ENCODE measurements at regions of chr12 and their contacts with region 1.

Region 1: DNA sequence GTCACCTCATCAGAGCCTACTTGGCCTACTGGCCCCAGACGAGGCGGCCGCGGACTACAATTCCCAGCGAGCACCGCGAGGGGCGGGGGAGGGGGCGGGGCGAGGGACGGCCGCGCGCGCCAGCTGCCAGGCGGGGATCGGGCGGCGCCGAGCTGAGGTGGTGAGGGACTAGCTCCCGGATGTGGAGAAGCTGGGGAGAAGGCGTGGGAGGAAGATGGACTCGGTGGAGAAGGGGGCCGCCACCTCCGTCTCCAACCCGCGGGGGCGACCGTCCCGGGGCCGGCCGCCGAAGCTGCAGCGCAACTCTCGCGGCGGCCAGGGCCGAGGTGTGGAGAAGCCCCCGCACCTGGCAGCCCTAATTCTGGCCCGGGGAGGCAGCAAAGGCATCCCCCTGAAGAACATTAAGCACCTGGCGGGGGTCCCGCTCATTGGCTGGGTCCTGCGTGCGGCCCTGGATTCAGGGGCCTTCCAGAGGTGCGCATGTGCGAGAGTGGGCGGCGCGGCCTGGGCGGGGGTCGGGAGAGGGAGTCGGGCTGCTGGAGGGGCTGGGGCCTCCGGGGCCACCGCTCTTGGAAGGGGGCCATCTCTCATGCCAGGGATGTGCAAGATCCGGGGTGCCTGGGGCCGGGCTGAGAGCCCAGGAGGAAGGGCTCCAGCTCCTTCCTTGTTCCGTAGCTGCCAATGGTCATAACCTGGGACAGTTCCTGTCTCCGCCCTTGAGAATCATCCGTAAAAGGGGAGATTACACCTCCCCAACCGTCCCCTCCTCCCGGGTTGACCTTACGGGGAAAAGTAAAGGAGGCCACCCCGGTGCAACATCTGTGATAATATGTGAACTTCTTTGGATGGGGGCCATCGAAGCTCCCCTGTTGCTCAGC is at the start of gene CMAS:
- DNase-seq: peak; percentile 87
- H3K4me3 Mint-ChIP-seq: peak within 1 kb of the TSS; percentile 96
- H3K27ac Mint-ChIP-seq: peak within 1 kb of the TSS; percentile 89
- H3K4me1 Mint-ChIP-seq: peaks cover 51% of the 10 kb centered on the region
- H3K27me3 Mint-ChIP-seq: no peaks in the 10 kb centered on the region
- total RNA-seq, gene CMAS: 51.1 to 51.2 TPM

Region 2: DNA sequence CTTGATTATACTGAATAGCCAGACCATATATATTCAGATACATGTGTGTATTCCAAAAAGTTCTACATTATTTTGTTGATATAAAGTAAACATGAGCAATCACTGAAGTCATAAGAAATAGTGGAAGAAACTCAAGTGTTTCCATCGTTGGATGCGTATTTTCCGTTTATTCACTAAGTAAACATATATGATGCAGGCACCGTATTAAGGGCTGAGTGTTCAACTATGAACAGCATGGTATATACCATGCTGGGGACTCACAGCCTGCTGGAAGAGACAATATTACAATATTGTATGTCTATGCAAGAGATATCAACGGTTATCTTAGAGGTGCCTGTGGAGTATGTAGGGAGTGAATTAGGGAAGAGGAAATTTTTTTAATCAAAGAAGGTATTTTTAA is 607.7 kb before region 1 on chr12:
- CTCF ChIA-PET with region 1: no interaction called
- POLR2A ChIA-PET with region 1: no interaction called
- intact Hi-C with region 1: loop called (anchors 5 kb)
- DNase-seq: no peak
- H3K4me3 Mint-ChIP-seq: peak overlapping the region; percentile 93
- H3K27ac Mint-ChIP-seq: peak overlapping the region; percentile 96
- H3K4me1 Mint-ChIP-seq: peaks cover 39% of the 10 kb centered on the region
- H3K27me3 Mint-ChIP-seq: no peaks in the 10 kb centered on the region

Region 3: DNA sequence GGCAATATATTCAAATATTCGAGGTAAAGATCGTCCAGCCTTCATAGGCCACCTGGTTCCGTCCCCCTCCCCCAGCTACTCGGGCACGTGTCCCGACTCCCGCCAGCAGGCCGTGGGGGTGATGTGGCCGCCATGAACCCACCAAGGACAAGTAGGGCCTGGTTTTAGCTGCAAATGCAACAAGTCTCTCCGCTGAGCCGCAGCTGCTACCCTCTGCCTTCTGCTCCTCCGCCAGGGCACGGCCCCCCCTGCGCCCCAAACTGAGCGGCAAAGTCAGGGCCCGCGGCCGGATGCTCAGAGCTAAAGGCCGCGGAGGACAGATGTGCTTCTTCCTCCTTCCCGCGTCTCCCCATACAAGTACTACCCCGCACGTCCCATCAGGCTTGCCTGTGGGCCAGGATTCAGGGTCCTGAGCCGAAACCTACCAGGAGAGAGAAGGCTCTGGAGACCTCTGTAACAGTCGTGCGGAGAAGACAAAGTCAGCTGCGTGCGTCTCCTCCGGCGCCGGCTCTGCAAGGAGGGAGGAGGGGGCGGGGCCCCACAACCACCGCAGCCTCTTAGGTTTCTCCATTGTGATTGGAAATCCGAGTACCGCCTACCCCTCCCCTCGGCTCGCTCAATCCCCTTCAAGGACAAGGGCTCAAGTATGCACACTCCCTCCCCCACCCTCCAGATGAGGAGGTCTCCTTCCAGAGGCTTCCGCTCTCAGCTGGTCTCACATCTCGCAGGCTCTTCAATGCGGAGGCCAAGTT is 388.8 kb before region 1 on chr12 and contains the start of gene LDHB:
- CTCF ChIA-PET with region 1: no interaction called
- POLR2A ChIA-PET with region 1: interaction called, 9 read pairs
- intact Hi-C with region 1: loop called (anchors 1 kb)
- DNase-seq: peak; percentile 98
- H3K4me3 Mint-ChIP-seq: peak within 1 kb of the TSS; percentile 98
- H3K27ac Mint-ChIP-seq: peak within 1 kb of the TSS; percentile 95
- H3K4me1 Mint-ChIP-seq: peaks cover 60% of the 10 kb centered on the region
- H3K27me3 Mint-ChIP-seq: no peaks in the 10 kb centered on the region
- total RNA-seq, gene LDHB: 1,684 to 1,884 TPM

Region 4: GRCh38 chr12:22164139-22164538 is 117.8 kb after region 1 on chr12:
- CTCF ChIA-PET with region 1: no interaction called
- POLR2A ChIA-PET with region 1: no interaction called
- intact Hi-C with region 1: loop called (anchors 5 kb)
- DNase-seq: peak; percentile 18
- H3K4me3 Mint-ChIP-seq: peak overlapping the region; percentile 9
- H3K27ac Mint-ChIP-seq: peak overlapping the region; percentile 65
- H3K4me1 Mint-ChIP-seq: peaks cover 40% of the 10 kb centered on the region
- H3K27me3 Mint-ChIP-seq: no peaks in the 10 kb centered on the region

Region 5: DNA sequence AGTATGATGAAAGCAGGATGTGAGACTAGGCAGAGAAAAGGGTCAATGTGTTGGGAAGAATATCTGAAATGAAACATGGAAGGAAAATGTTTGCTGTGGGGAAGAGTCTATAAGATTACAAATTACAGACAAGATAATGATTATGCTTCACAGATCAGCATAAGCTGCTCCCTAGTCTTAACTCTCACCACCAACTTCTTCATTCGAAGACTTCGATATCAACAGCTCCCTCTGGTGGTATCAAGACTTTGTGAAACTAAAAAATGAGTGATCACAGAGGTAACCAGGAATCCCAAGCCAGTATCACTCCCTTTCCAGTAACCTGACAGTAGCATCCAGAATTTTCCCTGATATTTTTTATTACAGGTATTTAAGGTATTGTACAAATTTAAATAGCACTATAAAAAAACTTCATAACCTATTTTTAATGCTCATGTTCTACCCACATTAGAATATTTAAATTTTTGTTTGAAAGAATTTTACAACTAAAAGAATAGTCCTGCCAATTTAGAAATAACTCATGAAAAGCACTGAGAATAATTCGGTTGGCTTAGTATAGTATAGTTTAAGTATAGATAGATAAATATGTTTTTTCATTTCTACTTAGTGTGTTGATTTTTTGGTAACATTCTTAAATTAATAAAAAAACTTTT is 413.6 kb after region 1 on chr12:
- CTCF ChIA-PET with region 1: interaction called, 13 read pairs
- POLR2A ChIA-PET with region 1: no interaction called
- intact Hi-C with region 1: no loop called
- DNase-seq: no peak
- H3K4me3 Mint-ChIP-seq: no peak overlapping the region
- H3K27ac Mint-ChIP-seq: no peak overlapping the region
- H3K4me1 Mint-ChIP-seq: peaks cover 4% of the 10 kb centered on the region
- H3K27me3 Mint-ChIP-seq: no peaks in the 10 kb centered on the region

Measured in activated CD4-positive, alpha-beta memory T cell treated with anti-CD3 and anti-CD28 coated beads for 36 hours (primary cell).